Naive thymus-derived CD4-positive, alpha-beta T cell (primary cell): ENCODE measurements at regions of chr20 and their contacts with region 1.

Region 1: DNA sequence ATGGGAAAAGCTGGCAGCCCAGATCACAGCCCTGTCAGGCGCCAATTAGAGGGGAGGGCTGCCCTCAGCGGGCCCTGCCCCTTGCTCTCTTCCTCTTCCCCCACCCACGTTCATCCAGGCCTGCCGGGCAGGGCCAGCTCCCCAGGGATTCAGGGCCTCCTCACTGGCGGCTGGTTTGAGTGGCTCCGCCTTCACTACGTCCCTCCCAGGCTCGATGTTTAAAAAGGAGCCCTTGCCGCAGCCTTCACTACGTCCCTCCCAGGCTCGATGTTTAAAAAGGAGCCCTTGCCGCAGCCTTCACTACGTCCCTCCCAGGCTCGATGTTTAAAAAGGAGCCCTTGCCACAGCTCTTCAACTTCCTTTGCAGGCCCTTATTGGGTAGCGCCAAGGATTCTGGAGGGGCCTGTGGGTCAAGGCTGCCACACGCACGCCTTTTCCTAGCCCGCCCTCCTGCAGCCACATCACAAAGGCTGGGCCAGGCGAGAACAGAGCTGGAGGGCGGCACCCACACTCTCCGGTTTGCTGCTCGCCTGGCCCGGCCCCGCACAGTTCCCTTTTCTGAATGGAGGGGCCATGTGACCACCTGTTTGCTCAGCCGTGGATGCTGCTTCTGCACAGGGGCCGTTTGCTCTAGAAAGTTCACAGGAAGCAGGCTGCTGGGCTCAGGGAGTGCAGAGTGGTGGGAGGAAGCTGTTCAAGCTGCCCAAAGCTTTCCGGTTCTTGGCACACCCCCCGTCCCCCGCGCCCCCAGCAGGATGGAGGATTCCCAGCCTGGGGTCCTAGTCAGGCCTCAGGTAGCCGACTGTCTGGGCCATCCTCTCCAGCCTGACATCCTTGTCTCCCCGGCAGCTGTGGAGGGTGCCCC is 1.6 kb downstream of the SLC17A9 start:
- DNase-seq: peak; percentile 49 to 84 (median 74)
- ATAC-seq: peak; percentile 91
- H3K4me3 ChIP-seq: peak overlapping the region; percentile 65
- H3K4me3 Mint-ChIP-seq: peak overlapping the region; percentile 81 to 91 (median 84)
- H3K27ac ChIP-seq: peak overlapping the region; percentile 66
- H3K27ac Mint-ChIP-seq: peak overlapping the region; percentile 89 to 98 (median 93)
- H3K4me1 ChIP-seq: peaks cover 13 to 32% of the 10 kb centered on the region in 2 donors
- H3K4me1 Mint-ChIP-seq: peaks cover 11 to 47% (median 28%) of the 10 kb centered on the region in 7 donors
- H3K27me3 ChIP-seq: no peaks in the 10 kb centered on the region
- H3K27me3 Mint-ChIP-seq: no peaks in the 10 kb centered on the region

Region 2: GRCh38 chr20:62907384-62908317 is 46.4 kb before region 1 on chr20:
- CTCF ChIA-PET with region 1: interaction called, 12 read pairs
- POLR2A ChIA-PET with region 1: interaction called, 3 read pairs
- intact Hi-C with region 1: no loop called
- DNase-seq: peak in 4 of 9 donors; percentile 27 to 46 (median 40)
- ATAC-seq: peak; percentile 82
- H3K4me3 ChIP-seq: no peak overlapping the region
- H3K4me3 Mint-ChIP-seq: no peak overlapping the region
- H3K27ac ChIP-seq: no peak overlapping the region
- H3K27ac Mint-ChIP-seq: peak overlapping the region in 7 of 9 donors; percentile 19 to 71 (median 51)
- H3K4me1 ChIP-seq: no peaks in the 10 kb centered on the region
- H3K4me1 Mint-ChIP-seq: peaks cover 10 to 42% (median 24%) of the 10 kb centered on the region in 7 donors
- H3K27me3 ChIP-seq: no peaks in the 10 kb centered on the region
- H3K27me3 Mint-ChIP-seq: no peaks in the 10 kb centered on the region

Region 3: DNA sequence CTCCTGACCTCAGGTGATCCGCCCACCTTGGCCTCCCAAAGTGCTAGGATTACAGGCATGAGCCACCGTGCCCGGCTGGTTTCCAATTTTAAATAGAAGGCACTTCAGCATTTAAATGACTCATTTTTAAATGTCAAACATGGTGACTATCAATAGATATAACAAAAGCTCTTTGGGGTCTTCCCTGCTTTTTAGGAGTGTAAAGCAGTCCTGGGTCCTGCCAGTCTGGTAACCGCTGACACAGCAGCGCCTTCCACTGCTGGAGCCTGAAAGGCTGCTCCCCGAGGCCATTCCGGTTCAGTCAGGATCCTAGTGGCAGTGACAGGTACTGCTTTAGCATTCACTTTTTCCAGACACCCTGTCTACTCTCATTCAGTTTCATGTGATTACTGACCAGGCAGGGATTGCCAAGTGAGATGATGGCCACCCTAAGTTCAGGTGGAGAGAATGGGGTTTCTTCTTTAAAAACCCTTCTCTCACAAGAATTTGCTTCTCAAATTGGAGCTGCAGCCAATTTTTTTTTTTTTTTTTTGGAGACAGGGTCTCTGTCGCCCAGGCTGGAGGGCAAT is 32.9 kb before region 1 on chr20:
- CTCF ChIA-PET with region 1: interaction called, 5 read pairs
- POLR2A ChIA-PET with region 1: interaction called, 19 read pairs
- intact Hi-C with region 1: loop called in 1 of 2 experiments (anchors 1 kb)
- DNase-seq: peak in 8 of 9 donors; percentile 51 to 78 (median 61)
- ATAC-seq: peak; percentile 69
- H3K4me3 ChIP-seq: peak overlapping the region; percentile 26
- H3K4me3 Mint-ChIP-seq: peak overlapping the region; percentile 76 to 89 (median 84)
- H3K27ac ChIP-seq: peak overlapping the region; percentile 63
- H3K27ac Mint-ChIP-seq: peak overlapping the region; percentile 67 to 94 (median 91)
- H3K4me1 ChIP-seq: peaks cover 74 to 84% of the 10 kb centered on the region in 2 donors
- H3K4me1 Mint-ChIP-seq: peaks cover 69 to 87% (median 82%) of the 10 kb centered on the region in 7 donors
- H3K27me3 ChIP-seq: no peaks in the 10 kb centered on the region
- H3K27me3 Mint-ChIP-seq: no peaks in the 10 kb centered on the region

Region 4: GRCh38 chr20:62937366-62938104 is 16.5 kb before region 1 on chr20:
- CTCF ChIA-PET with region 1: interaction called, 3 read pairs
- POLR2A ChIA-PET with region 1: interaction called, 58 read pairs
- intact Hi-C with region 1: loop called (anchors 1 kb)
- DNase-seq: peak; percentile 96 to 98 (median 97)
- ATAC-seq: peak; percentile 95
- H3K4me3 ChIP-seq: peak overlapping the region; percentile 94
- H3K4me3 Mint-ChIP-seq: peak overlapping the region in 6 of 10 donors; percentile 94 to 98 (median 96)
- H3K27ac ChIP-seq: peak overlapping the region; percentile 97
- H3K27ac Mint-ChIP-seq: peak overlapping the region; percentile 88 to 98 (median 95)
- H3K4me1 ChIP-seq: peaks cover 34 to 37% of the 10 kb centered on the region in 2 donors
- H3K4me1 Mint-ChIP-seq: peaks cover 26 to 51% (median 40%) of the 10 kb centered on the region in 7 donors
- H3K27me3 ChIP-seq: no peaks in the 10 kb centered on the region
- H3K27me3 Mint-ChIP-seq: no peaks in the 10 kb centered on the region

Region 5: GRCh38 chr20:62972270-62973032 is 18.4 kb after region 1 on chr20:
- CTCF ChIA-PET with region 1: interaction called, 11 read pairs
- POLR2A ChIA-PET with region 1: interaction called, 3 read pairs
- intact Hi-C with region 1: loop called in 1 of 2 experiments (anchors 1 kb)
- DNase-seq: peak; percentile 70 to 86 (median 79)
- ATAC-seq: peak; percentile 97
- H3K4me3 ChIP-seq: peak overlapping the region; percentile 36
- H3K4me3 Mint-ChIP-seq: peak overlapping the region; percentile 36 to 85 (median 62)
- H3K27ac ChIP-seq: no peak overlapping the region
- H3K27ac Mint-ChIP-seq: peak overlapping the region in 4 of 9 donors; percentile 3 to 38 (median 17)
- H3K4me1 ChIP-seq: peaks cover 8 to 13% of the 10 kb centered on the region in 2 donors
- H3K4me1 Mint-ChIP-seq: peaks cover 13 to 22% (median 15%) of the 10 kb centered on the region in 7 donors
- H3K27me3 ChIP-seq: peaks cover 9 to 10% of the 10 kb centered on the region in 2 donors
- H3K27me3 Mint-ChIP-seq: peaks cover 27 to 49% (median 37%) of the 10 kb centered on the region in 5 donors

Region 6: GRCh38 chr20:63082301-63082805 is 128.3 kb after region 1 on chr20:
- CTCF ChIA-PET with region 1: no interaction called
- POLR2A ChIA-PET with region 1: no interaction called
- intact Hi-C with region 1: no loop called
- DNase-seq: peak in 5 of 9 donors; percentile 24 to 51 (median 40)
- ATAC-seq: peak; percentile 48
- H3K4me3 ChIP-seq: no peak overlapping the region
- H3K4me3 Mint-ChIP-seq: no peak overlapping the region
- H3K27ac ChIP-seq: no peak overlapping the region
- H3K27ac Mint-ChIP-seq: no peak overlapping the region
- H3K4me1 ChIP-seq: no peaks in the 10 kb centered on the region
- H3K4me1 Mint-ChIP-seq: peaks cover 0 to 3% (median 0%) of the 10 kb centered on the region in 7 donors
- H3K27me3 ChIP-seq: no peaks in the 10 kb centered on the region
- H3K27me3 Mint-ChIP-seq: peaks cover 0 to 64% (median 43%) of the 10 kb centered on the region in 5 donors

Region 7: GRCh38 chr20:63101781-63102719 is 148.0 kb after region 1 on chr20:
- CTCF ChIA-PET with region 1: no interaction called
- POLR2A ChIA-PET with region 1: no interaction called
- intact Hi-C with region 1: loop called in 1 of 2 experiments (anchors 10 kb)
- DNase-seq: peak; percentile 53 to 84 (median 80)
- ATAC-seq: peak; percentile 76
- H3K4me3 ChIP-seq: peak overlapping the region; percentile 84
- H3K4me3 Mint-ChIP-seq: peak overlapping the region; percentile 86 to 95 (median 92)
- H3K27ac ChIP-seq: peak overlapping the region; percentile 88
- H3K27ac Mint-ChIP-seq: peak overlapping the region; percentile 90 to 99 (median 96)
- H3K4me1 ChIP-seq: no peaks in the 10 kb centered on the region
- H3K4me1 Mint-ChIP-seq: peaks cover 0 to 8% (median 5%) of the 10 kb centered on the region in 7 donors
- H3K27me3 ChIP-seq: no peaks in the 10 kb centered on the region
- H3K27me3 Mint-ChIP-seq: no peaks in the 10 kb centered on the region